ENCODE measurements at regions of chr5 and their contacts with region 1.

Region 1: GRCh38 chr5:10293907-10294662 is 13.6 kb downstream of the CMBL start:
- DNase-seq: no peak
- H3K4me3 ChIP-seq: no peak overlapping the region
- H3K27ac ChIP-seq: no peak overlapping the region
- H3K4me1 ChIP-seq: peaks cover 0 to 4% (median 0%) of the 10 kb centered on the region in 4 donors
- H3K27me3 ChIP-seq: no peaks in the 10 kb centered on the region
- CTCF ChIP-seq: no peak

Region 2: GRCh38 chr5:9466677-9467076 is 827.4 kb before region 1 on chr5:
- intact Hi-C with region 1: no loop called
- DNase-seq: no peak
- H3K4me3 ChIP-seq: no peak overlapping the region
- H3K27ac ChIP-seq: no peak overlapping the region
- H3K4me1 ChIP-seq: peaks cover 0 to 4% (median 0%) of the 10 kb centered on the region in 4 donors
- H3K27me3 ChIP-seq: no peaks in the 10 kb centered on the region
- CTCF ChIP-seq: no peak

Region 3: GRCh38 chr5:9739135-9739534 is 555.0 kb before region 1 on chr5:
- intact Hi-C with region 1: no loop called
- DNase-seq: no peak
- H3K4me3 ChIP-seq: no peak overlapping the region
- H3K27ac ChIP-seq: no peak overlapping the region
- H3K4me1 ChIP-seq: no peaks in the 10 kb centered on the region
- H3K27me3 ChIP-seq: no peaks in the 10 kb centered on the region
- CTCF ChIP-seq: no peak

Region 4: GRCh38 chr5:10339058-10339811 is 45.1 kb after region 1 on chr5:
- intact Hi-C with region 1: loop called (anchors 5 kb)
- DNase-seq: no peak
- H3K4me3 ChIP-seq: no peak overlapping the region
- H3K27ac ChIP-seq: no peak overlapping the region
- H3K4me1 ChIP-seq: peaks cover 0 to 2% (median under 1%) of the 10 kb centered on the region in 4 donors
- H3K27me3 ChIP-seq: no peaks in the 10 kb centered on the region
- CTCF ChIP-seq: no peak

Region 5: GRCh38 chr5:10409504-10409903 is 115.4 kb after region 1 on chr5:
- intact Hi-C with region 1: no loop called
- DNase-seq: no peak
- H3K4me3 ChIP-seq: no peak overlapping the region
- H3K27ac ChIP-seq: no peak overlapping the region
- H3K4me1 ChIP-seq: no peaks in the 10 kb centered on the region
- H3K27me3 ChIP-seq: no peaks in the 10 kb centered on the region
- CTCF ChIP-seq: no peak

Measured in tibial artery (tissue), 4 donors.